A673 (cell line): ENCODE measurements at regions of chr5 and their contacts with region 1.

Region 1: DNA sequence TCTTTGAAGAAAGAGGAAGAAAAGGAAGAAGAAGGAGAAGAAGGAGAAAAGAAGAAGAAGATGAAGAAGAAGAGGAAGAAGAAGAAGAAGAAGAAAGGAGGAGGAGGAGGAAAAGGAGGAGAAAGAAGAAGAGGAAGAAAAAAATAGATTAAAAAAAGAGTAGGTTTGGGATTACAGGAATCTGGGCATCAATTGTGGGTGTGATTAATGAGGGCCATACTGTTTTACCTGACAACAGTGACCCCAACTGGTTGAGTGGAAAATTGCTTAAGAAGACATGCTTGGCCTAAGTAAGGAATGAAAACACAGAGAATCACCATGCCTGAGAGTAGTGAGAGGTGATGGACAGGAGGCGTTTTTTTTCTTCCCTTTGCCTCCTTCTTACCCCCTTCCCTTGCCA is 114.6 kb downstream of the FAM170A start:
- DNase-seq: peak; percentile 66
- H3K4me3 ChIP-seq: no peak overlapping the region
- H3K27ac ChIP-seq: no peak overlapping the region
- H3K4me1 ChIP-seq: no peaks in the 10 kb centered on the region
- H3K27me3 ChIP-seq: peaks cover 22% of the 10 kb centered on the region
- CTCF ChIP-seq: peak; percentile 64

Region 2: DNA sequence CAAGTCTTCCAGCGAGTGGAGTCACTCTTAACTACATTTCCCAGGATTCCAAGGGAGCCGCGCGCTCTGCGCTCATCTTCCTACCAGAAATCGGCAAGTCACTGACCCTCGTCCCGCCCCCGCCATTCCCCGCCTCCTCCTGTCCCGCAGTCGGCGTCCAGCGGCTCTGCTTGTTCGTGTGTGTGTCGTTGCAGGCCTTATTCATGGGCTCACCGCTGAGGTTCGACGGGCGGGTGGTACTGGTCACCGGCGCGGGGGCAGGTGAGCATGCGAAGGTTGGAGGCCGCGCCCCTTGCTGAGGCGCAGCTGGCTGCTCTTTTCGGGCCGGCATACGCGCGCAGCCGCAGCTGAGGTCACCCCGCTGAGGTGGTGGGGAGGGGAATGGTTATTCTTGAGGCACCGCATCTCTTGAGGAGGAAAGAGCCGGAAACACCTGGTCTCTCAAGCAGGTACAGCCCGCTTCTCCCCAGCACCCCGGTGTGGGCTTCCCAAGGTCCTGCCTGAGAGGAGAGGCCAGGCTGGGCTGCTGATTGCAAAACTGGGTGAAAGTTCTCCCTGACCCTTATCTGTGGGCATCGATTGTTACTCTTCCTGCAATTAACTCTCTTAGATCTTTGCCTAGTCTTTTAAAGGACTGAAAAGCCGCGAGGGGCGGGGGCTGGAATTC is 291.4 kb before region 1 on chr5 and contains the start of gene HSD17B4:
- CTCF ChIA-PET with region 1: no interaction called
- POLR2A ChIA-PET with region 1: no interaction called
- intact Hi-C with region 1: no loop called
- DNase-seq: peak; percentile 95
- H3K4me3 ChIP-seq: peak within 1 kb of the TSS; percentile 89
- H3K27ac ChIP-seq: peak within 1 kb of the TSS; percentile 89
- H3K4me1 ChIP-seq: peaks cover 6% of the 10 kb centered on the region
- H3K27me3 ChIP-seq: no peaks in the 10 kb centered on the region
- CTCF ChIP-seq: no peak
- total RNA-seq, gene HSD17B4: 140 and 151 TPM in 2 replicates

Region 3: GRCh38 chr5:119470851-119471451 is 273.0 kb before region 1 on chr5:
- CTCF ChIA-PET with region 1: no interaction called
- POLR2A ChIA-PET with region 1: no interaction called
- intact Hi-C with region 1: loop called (anchors 2 kb)
- DNase-seq: peak; percentile 56
- H3K4me3 ChIP-seq: no peak overlapping the region
- H3K27ac ChIP-seq: no peak overlapping the region
- H3K4me1 ChIP-seq: peaks cover 4% of the 10 kb centered on the region
- H3K27me3 ChIP-seq: no peaks in the 10 kb centered on the region
- CTCF ChIP-seq: peak; percentile 82

Region 4: DNA sequence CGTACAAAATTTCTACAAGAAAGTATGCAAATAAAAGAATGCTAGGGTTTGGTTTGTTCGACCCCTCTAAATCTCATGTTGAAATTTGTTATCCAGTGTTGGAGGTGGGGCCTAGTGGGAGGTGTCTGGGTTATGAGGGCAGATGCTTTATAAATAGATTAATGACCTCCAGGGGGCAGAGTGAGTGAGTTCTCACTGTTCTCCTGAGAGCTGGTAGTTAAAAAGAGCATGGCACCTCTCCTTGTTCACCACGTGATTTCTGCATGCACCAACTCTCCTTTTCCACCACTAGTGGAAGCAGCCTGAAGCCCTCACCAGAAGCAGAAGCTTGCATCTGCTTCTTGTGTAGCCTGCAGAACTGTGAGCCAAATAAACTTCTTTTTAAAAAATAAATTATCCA is 165.0 kb before region 1 on chr5:
- CTCF ChIA-PET with region 1: no interaction called
- POLR2A ChIA-PET with region 1: no interaction called
- intact Hi-C with region 1: loop called (anchors 5 kb)
- DNase-seq: peak; percentile 74
- H3K4me3 ChIP-seq: no peak overlapping the region
- H3K27ac ChIP-seq: no peak overlapping the region
- H3K4me1 ChIP-seq: no peaks in the 10 kb centered on the region
- H3K27me3 ChIP-seq: peaks cover 8% of the 10 kb centered on the region
- CTCF ChIP-seq: peak; percentile 58

Region 5: GRCh38 chr5:120327180-120327579 is 583.3 kb after region 1 on chr5:
- CTCF ChIA-PET with region 1: no interaction called
- POLR2A ChIA-PET with region 1: no interaction called
- intact Hi-C with region 1: no loop called
- DNase-seq: peak; percentile 2
- H3K4me3 ChIP-seq: no peak overlapping the region
- H3K27ac ChIP-seq: no peak overlapping the region
- H3K4me1 ChIP-seq: no peaks in the 10 kb centered on the region
- H3K27me3 ChIP-seq: no peaks in the 10 kb centered on the region
- CTCF ChIP-seq: no peak; the same call in 1 of the 2 replicates